Activated CD4-positive, alpha-beta memory T cell treated with anti-CD3 and anti-CD28 coated beads for 36 hours (primary cell): ENCODE measurements at regions of chr14 and their contacts with region 1.

Region 1: DNA sequence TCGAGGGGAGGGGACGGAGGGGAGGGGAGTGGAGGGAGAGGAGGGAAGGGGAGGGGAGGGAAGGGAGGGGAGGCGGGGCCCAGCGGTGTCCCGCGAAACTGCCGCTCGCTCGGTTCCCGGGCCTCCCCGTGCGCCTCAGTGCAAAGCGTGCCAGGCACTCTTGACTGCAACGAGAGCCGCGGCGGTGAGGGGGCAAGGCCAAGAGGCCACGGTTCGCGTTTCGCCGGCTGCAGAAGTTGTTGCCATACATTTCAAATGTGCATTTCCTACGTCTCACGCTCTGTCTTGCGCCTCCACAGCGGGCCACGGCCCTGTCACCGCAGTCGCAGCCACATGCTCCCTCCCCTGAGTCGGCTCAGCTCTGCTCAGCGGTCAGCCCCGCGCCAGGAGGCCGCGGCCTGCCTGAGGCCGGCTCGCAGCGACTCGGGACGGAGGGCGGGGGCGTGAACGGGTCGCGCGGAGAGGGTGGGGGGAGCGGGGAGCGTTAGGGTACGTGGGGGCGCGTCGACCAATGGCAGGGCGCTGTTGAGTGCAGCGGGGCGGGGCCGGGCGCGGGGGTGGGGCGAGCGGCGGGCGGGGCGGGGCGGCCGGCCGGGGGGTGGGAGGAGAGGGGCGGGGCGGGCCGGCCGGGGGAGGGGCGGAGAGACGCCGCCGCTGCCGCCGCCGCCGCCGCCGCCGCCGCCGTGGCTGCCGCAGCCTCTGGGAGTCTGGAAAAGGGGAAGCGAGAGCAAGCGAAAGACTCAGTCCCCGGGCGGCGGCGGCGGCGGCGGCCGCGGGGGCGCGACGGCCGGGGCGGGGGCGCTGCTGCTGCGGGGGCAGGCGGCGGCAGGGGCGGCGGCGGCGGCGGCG is at the start of gene PPP2R5C:
- DNase-seq: peak; percentile 91
- H3K4me3 Mint-ChIP-seq: peak within 1 kb of the TSS; percentile 87
- H3K27ac Mint-ChIP-seq: peak within 1 kb of the TSS; percentile 75
- H3K4me1 Mint-ChIP-seq: peaks cover 46% of the 10 kb centered on the region
- H3K27me3 Mint-ChIP-seq: no peaks in the 10 kb centered on the region
- total RNA-seq, gene PPP2R5C: 252 to 268 TPM

Region 2: GRCh38 chr14:100239840-100240724 is 1521.2 kb before region 1 on chr14:
- CTCF ChIA-PET with region 1: no interaction called
- POLR2A ChIA-PET with region 1: no interaction called
- intact Hi-C with region 1: loop called (anchors 5 kb)
- DNase-seq: peak; percentile 90
- H3K4me3 Mint-ChIP-seq: peak overlapping the region; percentile 81
- H3K27ac Mint-ChIP-seq: peak overlapping the region; percentile 89
- H3K4me1 Mint-ChIP-seq: peaks cover 54% of the 10 kb centered on the region
- H3K27me3 Mint-ChIP-seq: peaks cover 2% of the 10 kb centered on the region

Region 3: DNA sequence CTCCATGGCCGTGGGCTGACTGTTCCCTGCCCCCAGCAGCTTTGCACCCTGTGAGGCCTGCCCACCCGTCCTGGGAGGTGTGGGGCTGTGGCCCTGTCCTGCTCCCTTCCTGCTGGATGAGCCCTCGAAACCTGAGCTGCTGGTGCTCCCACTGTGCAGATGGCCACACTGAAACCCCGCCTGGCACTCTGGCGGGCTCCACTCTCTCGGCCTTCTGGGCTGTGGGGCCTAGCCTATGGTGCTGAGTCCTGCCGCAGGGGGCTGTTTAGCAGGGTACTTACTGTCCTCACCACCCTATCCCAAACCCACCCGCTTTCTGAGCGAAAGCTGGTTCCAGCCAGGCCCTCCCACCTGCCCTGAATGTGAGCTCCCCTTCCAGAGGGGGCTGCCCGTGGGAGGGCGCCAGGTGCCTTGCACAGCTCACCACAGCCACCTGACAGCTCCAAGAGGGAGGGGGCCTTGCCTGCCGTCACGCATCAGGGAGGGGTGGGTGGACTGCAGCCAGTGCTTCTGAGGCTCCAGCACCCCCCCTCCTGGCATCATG is 1430.8 kb before region 1 on chr14:
- CTCF ChIA-PET with region 1: no interaction called
- POLR2A ChIA-PET with region 1: no interaction called
- intact Hi-C with region 1: no loop called
- DNase-seq: no peak
- H3K4me3 Mint-ChIP-seq: no peak overlapping the region
- H3K27ac Mint-ChIP-seq: no peak overlapping the region
- H3K4me1 Mint-ChIP-seq: no peaks in the 10 kb centered on the region
- H3K27me3 Mint-ChIP-seq: no peaks in the 10 kb centered on the region

Region 4: GRCh38 chr14:101731187-101732080 is 29.8 kb before region 1 on chr14:
- CTCF ChIA-PET with region 1: interaction called, 3 read pairs
- POLR2A ChIA-PET with region 1: interaction called, 13 read pairs
- intact Hi-C with region 1: loop called (anchors 1 kb)
- DNase-seq: peak; percentile 94
- H3K4me3 Mint-ChIP-seq: peak overlapping the region; percentile 74
- H3K27ac Mint-ChIP-seq: peak overlapping the region; percentile 97
- H3K4me1 Mint-ChIP-seq: peaks cover 61% of the 10 kb centered on the region
- H3K27me3 Mint-ChIP-seq: no peaks in the 10 kb centered on the region

Region 5: GRCh38 chr14:101851736-101852405 is 90.6 kb after region 1 on chr14:
- CTCF ChIA-PET with region 1: no interaction called
- POLR2A ChIA-PET with region 1: no interaction called
- intact Hi-C with region 1: no loop called
- DNase-seq: no peak
- H3K4me3 Mint-ChIP-seq: no peak overlapping the region
- H3K27ac Mint-ChIP-seq: peak overlapping the region; percentile 31
- H3K4me1 Mint-ChIP-seq: peaks cover 84% of the 10 kb centered on the region
- H3K27me3 Mint-ChIP-seq: no peaks in the 10 kb centered on the region

Region 6: DNA sequence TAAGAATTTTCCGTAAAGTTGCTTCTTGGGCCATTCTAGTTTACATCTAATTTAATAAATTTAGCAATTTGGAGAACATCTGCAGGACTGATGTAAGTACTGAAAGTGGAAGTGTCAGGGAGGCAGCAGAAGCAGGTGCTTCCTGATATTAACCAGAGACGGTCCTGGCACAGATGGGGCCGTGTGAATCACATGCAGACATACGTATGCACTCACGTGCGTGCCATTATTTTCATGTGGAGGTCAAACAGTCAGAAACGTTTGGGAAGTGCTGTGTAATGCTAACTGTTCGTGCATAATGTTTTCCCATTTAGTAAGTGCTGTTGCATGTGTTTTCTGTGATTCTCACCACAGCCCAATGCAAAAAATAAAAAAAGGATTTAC is 115.3 kb after region 1 on chr14:
- CTCF ChIA-PET with region 1: interaction called, 3 read pairs
- POLR2A ChIA-PET with region 1: interaction called, 4 read pairs
- intact Hi-C with region 1: loop called (anchors 10 kb)
- DNase-seq: peak; percentile 87
- H3K4me3 Mint-ChIP-seq: peak overlapping the region; percentile 56
- H3K27ac Mint-ChIP-seq: peak overlapping the region; percentile 84
- H3K4me1 Mint-ChIP-seq: peaks cover 91% of the 10 kb centered on the region
- H3K27me3 Mint-ChIP-seq: no peaks in the 10 kb centered on the region

Region 7: GRCh38 chr14:102086972-102087761 is 325.9 kb after region 1 on chr14 and contains the start of gene HSP90AA1:
- CTCF ChIA-PET with region 1: no interaction called
- POLR2A ChIA-PET with region 1: interaction called, 3 read pairs
- intact Hi-C with region 1: loop called (anchors 2 kb)
- DNase-seq: peak; percentile 96
- H3K4me3 Mint-ChIP-seq: peak within 1 kb of the TSS; percentile 84
- H3K27ac Mint-ChIP-seq: peak within 1 kb of the TSS; percentile 94
- H3K4me1 Mint-ChIP-seq: peaks cover 43% of the 10 kb centered on the region
- H3K27me3 Mint-ChIP-seq: no peaks in the 10 kb centered on the region
- total RNA-seq, gene HSP90AA1: 1,107 to 1,148 TPM